Ascending aorta (tissue), 2 donors: ENCODE measurements at regions of chrX and their contacts with region 1.

Region 1: DNA sequence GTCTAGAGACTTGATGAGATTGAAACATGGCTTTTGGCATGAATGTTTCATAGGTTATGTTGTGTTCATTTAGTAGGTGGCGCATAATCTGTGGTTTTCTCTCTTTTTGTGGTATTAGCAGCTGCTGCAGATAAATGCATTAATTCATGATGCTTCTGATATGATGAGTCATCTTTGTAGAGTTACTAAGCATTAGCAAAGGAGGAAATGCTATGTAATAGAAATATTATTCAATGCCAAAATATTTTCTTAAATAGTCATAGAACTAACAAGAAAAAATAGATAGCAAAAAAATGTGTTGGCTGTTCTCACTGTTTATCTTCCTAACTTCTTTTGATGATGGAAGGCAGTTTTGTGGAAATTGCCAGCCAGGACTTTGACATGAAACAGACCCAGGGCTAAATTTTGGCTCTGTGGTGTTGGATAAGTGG is 3.6 kb downstream of the ZXDB start:
- DNase-seq: no peak
- H3K4me3 ChIP-seq: no peak overlapping the region
- H3K27ac ChIP-seq: peak overlapping the region in 1 of 2 donors; percentile 33
- H3K4me1 ChIP-seq: no peaks in the 10 kb centered on the region
- H3K27me3 ChIP-seq: no peaks in the 10 kb centered on the region
- CTCF ChIP-seq: no peak

Region 2: DNA sequence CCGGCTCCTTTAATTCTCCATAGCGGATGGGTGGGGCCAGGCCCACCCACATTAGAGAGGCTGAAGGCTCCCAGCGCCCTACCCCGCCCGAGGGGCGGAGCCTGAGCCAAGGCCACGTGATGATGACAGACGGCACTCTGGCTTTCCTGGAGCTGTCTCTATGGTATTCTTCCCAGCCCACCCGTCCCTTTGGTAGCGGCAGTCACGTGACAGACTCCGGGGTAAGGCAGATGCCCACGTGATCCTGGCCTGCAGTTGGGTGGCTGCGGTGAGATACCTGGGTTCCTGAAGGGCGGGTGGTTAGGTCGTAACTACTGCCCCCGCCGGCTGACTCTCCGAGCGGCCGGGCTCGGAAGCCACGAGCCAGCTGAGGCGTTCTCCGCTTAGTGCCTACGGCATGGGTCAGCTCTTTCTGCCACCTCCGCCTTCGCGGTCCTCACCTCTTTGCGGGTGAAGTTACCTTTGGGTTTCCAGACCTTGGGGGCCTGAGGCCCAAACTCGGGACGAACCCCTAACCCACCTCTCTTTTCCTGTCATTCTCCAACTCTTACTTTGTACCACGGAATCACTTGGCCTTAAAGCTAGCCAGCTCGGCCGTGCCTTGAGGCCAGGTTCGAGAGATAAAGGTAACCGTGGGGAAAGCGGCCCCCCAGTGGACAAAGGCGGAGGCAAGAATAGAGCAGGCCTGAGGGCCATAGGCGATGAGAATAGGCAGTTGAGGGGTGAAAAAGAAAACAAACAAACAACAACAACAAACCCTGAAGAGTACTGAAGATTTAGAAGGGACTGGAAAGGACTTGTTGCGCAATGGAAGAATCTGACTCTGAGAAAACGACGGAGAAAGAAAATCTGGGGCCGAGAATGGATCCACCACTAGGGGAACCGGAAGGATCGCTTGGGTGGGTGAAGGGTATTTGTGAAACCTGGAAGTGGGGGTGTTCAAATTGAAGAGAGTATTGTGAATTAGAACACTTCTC is 1877.6 kb before region 1 on chrX and contains the start of gene RRAGB:
- intact Hi-C with region 1: loop called (anchors 10 kb)
- DNase-seq: peak; percentile 93 to 96
- H3K4me3 ChIP-seq: peak within 1 kb of the TSS; percentile 59 to 81
- H3K27ac ChIP-seq: peak within 1 kb of the TSS; percentile 73 to 85
- H3K4me1 ChIP-seq: peaks cover 0 to 4% of the 10 kb centered on the region in 2 donors
- H3K27me3 ChIP-seq: no peaks in the 10 kb centered on the region
- CTCF ChIP-seq: peak; percentile 4 to 60 (median 49)
- total RNA-seq, gene RRAGB: 9.9 TPM

Region 3: DNA sequence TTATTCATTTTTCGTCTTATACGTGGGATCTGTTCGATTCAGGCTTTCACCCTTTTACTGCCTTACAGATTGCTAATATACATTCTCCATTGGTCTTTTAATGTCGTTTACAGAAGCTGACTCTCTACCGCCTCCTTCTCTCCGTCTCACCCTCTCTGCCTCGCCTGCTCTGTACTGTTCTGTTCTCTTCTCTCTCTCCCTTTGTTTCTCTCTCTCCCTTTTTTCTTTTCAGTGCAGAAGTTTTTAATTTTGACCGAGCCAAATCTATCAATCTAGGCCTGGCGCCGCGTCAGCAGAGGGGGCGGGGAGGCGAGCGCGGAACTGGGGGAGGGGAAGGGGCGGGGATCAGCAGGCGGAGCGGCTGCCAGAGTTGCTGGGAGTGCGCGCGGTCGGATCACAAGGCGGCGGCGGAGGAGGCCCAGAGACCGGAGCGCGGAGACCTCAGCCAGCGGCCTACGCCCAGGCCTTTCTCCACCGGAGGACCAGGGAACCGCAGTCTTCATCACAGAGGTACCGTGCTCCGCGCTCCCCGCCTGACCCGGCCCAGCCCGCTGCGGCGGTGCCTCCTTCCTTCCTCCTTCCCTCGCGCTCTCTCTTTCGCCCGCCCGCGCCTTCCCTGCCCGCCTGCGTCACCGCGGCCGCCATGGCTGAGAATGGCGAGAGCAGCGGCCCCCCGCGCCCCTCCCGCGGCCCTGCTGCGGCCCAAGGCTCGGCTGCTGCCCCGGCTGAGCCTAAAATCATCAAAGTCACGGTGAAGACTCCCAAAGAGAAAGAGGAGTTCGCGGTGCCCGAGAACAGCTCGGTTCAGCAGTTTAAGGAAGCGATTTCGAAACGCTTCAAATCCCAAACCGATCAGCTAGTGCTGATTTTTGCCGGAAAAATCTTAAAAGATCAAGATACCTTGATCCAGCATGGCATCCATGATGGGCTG is 1031.9 kb before region 1 on chrX and contains the start of gene UBQLN2:
- intact Hi-C with region 1: loop called (anchors 10 kb)
- DNase-seq: peak in 1 of 2 donors; percentile 85
- H3K4me3 ChIP-seq: peak within 1 kb of the TSS; percentile 66 to 68
- H3K27ac ChIP-seq: peak within 1 kb of the TSS; percentile 95 to 96
- H3K4me1 ChIP-seq: peaks cover 0 to under 1% of the 10 kb centered on the region in 2 donors
- H3K27me3 ChIP-seq: no peaks in the 10 kb centered on the region
- CTCF ChIP-seq: peak in 1 of 3 experiments; percentile 15
- total RNA-seq, gene UBQLN2: 23.9 TPM

Region 4: GRCh38 chrX:56813318-56813837 is 782.0 kb before region 1 on chrX:
- intact Hi-C with region 1: loop called (anchors 10 kb)
- DNase-seq: peak in 1 of 2 donors; percentile 74
- H3K4me3 ChIP-seq: no peak overlapping the region
- H3K27ac ChIP-seq: peak overlapping the region in 1 of 2 donors; percentile 29
- H3K4me1 ChIP-seq: peaks cover 0 to 6% of the 10 kb centered on the region in 2 donors
- H3K27me3 ChIP-seq: no peaks in the 10 kb centered on the region
- CTCF ChIP-seq: no peak

Region 5: GRCh38 chrX:56995271-56995994 is 600.0 kb before region 1 on chrX and contains the start of gene SPIN3:
- intact Hi-C with region 1: loop called (anchors 10 kb)
- DNase-seq: peak in 1 of 2 donors; percentile 84
- H3K4me3 ChIP-seq: peak within 1 kb of the TSS; percentile 48 to 78
- H3K27ac ChIP-seq: peak within 1 kb of the TSS; percentile 28 to 74
- H3K4me1 ChIP-seq: no peaks in the 10 kb centered on the region
- H3K27me3 ChIP-seq: no peaks in the 10 kb centered on the region
- CTCF ChIP-seq: no peak
- total RNA-seq, gene SPIN3: 3.9 TPM

Region 6: GRCh38 chrX:57906790-57907189 is 311.4 kb after region 1 on chrX:
- intact Hi-C with region 1: loop called (anchors 2 kb)
- DNase-seq: no peak
- H3K4me3 ChIP-seq: no peak overlapping the region
- H3K27ac ChIP-seq: peak overlapping the region in 1 of 2 donors; percentile 38
- H3K4me1 ChIP-seq: no peaks in the 10 kb centered on the region
- H3K27me3 ChIP-seq: no peaks in the 10 kb centered on the region
- CTCF ChIP-seq: no peak